ENCODE measurements at regions of chr13 and their contacts with region 1.

Region 1: GRCh38 chr13:99067160-99067985 is 89.5 kb upstream of the DOCK9 start:
- DNase-seq: no peak
- ATAC-seq: no peak
- H3K4me3 ChIP-seq: no peak overlapping the region
- H3K4me3 Mint-ChIP-seq: peak overlapping the region; percentile 33 to 81 (median 56)
- H3K27ac ChIP-seq: no peak overlapping the region
- H3K27ac Mint-ChIP-seq: peak overlapping the region; percentile 46 to 89 (median 76)
- H3K4me1 ChIP-seq: peaks cover 14 to 46% of the 10 kb centered on the region in 2 donors
- H3K4me1 Mint-ChIP-seq: peaks cover 44 to 98% (median 88%) of the 10 kb centered on the region in 7 donors
- H3K27me3 ChIP-seq: no peaks in the 10 kb centered on the region
- H3K27me3 Mint-ChIP-seq: peaks cover 0 to 13% (median 0%) of the 10 kb centered on the region in 5 donors

Region 2: DNA sequence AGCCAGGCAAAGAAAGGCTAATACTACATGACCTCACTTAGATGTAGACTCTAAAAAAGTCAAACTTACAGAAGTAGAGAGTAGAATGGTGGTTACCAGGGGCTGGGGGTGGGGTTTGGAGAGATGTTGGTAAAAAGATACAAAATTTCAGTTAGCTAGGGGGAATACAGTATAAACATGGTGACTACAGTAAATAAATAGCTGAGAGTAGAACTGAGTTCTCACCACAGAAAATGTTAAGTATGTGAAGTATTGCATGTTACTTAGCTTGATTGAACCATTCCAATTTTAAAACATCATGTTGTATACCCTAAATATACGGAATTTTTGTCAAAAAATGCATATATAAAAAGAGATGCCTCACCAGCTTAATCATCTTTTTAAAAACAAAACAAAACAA is 22.0 kb before region 1 on chr13:
- CTCF ChIA-PET with region 1: interaction called, 5 read pairs
- POLR2A ChIA-PET with region 1: interaction called, 35 read pairs
- intact Hi-C with region 1: loop called in 1 of 2 experiments (anchors 2 kb)
- DNase-seq: no peak
- ATAC-seq: no peak
- H3K4me3 ChIP-seq: no peak overlapping the region
- H3K4me3 Mint-ChIP-seq: peak overlapping the region; percentile 60 to 88 (median 80)
- H3K27ac ChIP-seq: peak overlapping the region; percentile 70
- H3K27ac Mint-ChIP-seq: peak overlapping the region; percentile 85 to 97 (median 94)
- H3K4me1 ChIP-seq: peaks cover 79 to 93% of the 10 kb centered on the region in 2 donors
- H3K4me1 Mint-ChIP-seq: peaks cover 64 to 100% (median 89%) of the 10 kb centered on the region in 7 donors
- H3K27me3 ChIP-seq: no peaks in the 10 kb centered on the region
- H3K27me3 Mint-ChIP-seq: peaks cover 0 to 19% (median 0%) of the 10 kb centered on the region in 5 donors

Region 3: GRCh38 chr13:99051768-99052455 is 15.5 kb before region 1 on chr13:
- CTCF ChIA-PET with region 1: interaction called, 3 read pairs
- POLR2A ChIA-PET with region 1: interaction called, 35 read pairs
- intact Hi-C with region 1: loop called (anchors 1 kb)
- DNase-seq: peak in 7 of 9 donors; percentile 48 to 81 (median 71)
- ATAC-seq: peak; percentile 65
- H3K4me3 ChIP-seq: peak overlapping the region; percentile 49
- H3K4me3 Mint-ChIP-seq: peak overlapping the region; percentile 75 to 88 (median 80)
- H3K27ac ChIP-seq: peak overlapping the region; percentile 61
- H3K27ac Mint-ChIP-seq: peak overlapping the region; percentile 72 to 96 (median 91)
- H3K4me1 ChIP-seq: peaks cover 72 to 95% of the 10 kb centered on the region in 2 donors
- H3K4me1 Mint-ChIP-seq: peaks cover 68 to 100% (median 92%) of the 10 kb centered on the region in 7 donors
- H3K27me3 ChIP-seq: no peaks in the 10 kb centered on the region
- H3K27me3 Mint-ChIP-seq: peaks cover 0 to 10% (median 0%) of the 10 kb centered on the region in 5 donors